SK-N-SH (cell line): ENCODE measurements at regions of chr17 and their contacts with region 1.

Region 1: GRCh38 chr17:80023481-80024205 is 12.0 kb downstream of the TBC1D16 start:
- DNase-seq: peak; percentile 61
- H3K4me3 ChIP-seq: no peak overlapping the region
- H3K27ac ChIP-seq: no peak overlapping the region
- H3K4me1 ChIP-seq: peaks cover 0 to 2% of the 10 kb centered on the region in 2 experiments; a peak in 1 of 4 replicates
- H3K27me3 ChIP-seq: no peaks in the 10 kb centered on the region
- CTCF ChIP-seq: no peak
- EP300 ChIP-seq: no peak
- RAD21 ChIP-seq: no peak

Region 2: GRCh38 chr17:79905832-79906231 is 117.8 kb before region 1 on chr17:
- CTCF ChIA-PET with region 1: no interaction called
- POLR2A ChIA-PET with region 1: no interaction called
- DNase-seq: peak; percentile 41
- H3K4me3 ChIP-seq: no peak overlapping the region
- H3K27ac ChIP-seq: no peak overlapping the region
- H3K4me1 ChIP-seq: no peaks in the 10 kb centered on the region
- H3K27me3 ChIP-seq: peaks cover 27% of the 10 kb centered on the region; the same call in 1 of the 2 replicates
- CTCF ChIP-seq: peak; percentile 27; the same call in 1 of the 2 replicates
- EP300 ChIP-seq: no peak
- RAD21 ChIP-seq: no peak

Region 3: GRCh38 chr17:80035943-80036714 is 12.5 kb after region 1 on chr17 and contains the start of gene CCDC40:
- CTCF ChIA-PET with region 1: interaction called, 16 read pairs
- POLR2A ChIA-PET with region 1: interaction called, 8 read pairs
- DNase-seq: peak; percentile 95
- H3K4me3 ChIP-seq: peak within 1 kb of the TSS; percentile 82 to 100
- H3K27ac ChIP-seq: peak within 1 kb of the TSS; percentile 91 to 96
- H3K4me1 ChIP-seq: peaks cover 3 to 31% of the 10 kb centered on the region in 2 experiments; a peak in 2 of 4 replicates
- H3K27me3 ChIP-seq: no peaks in the 10 kb centered on the region
- CTCF ChIP-seq: no peak; the same call in none of the 2 replicates
- EP300 ChIP-seq: no peak
- RAD21 ChIP-seq: no peak
- polyA plus RNA-seq, gene CCDC40: 17.3 and 21.6 TPM in 2 replicates

Region 4: GRCh38 chr17:80147035-80147836 is 123.6 kb after region 1 on chr17 and contains the start of gene EIF4A3:
- CTCF ChIA-PET with region 1: no interaction called
- POLR2A ChIA-PET with region 1: no interaction called
- DNase-seq: peak; percentile 100
- H3K4me3 ChIP-seq: peak within 1 kb of the TSS; percentile 79 to 97
- H3K27ac ChIP-seq: peak within 1 kb of the TSS; percentile 86 to 87
- H3K4me1 ChIP-seq: peaks cover 12 to 21% of the 10 kb centered on the region in 2 experiments; a peak in 2 of 4 replicates
- H3K27me3 ChIP-seq: no peaks in the 10 kb centered on the region
- CTCF ChIP-seq: no peak; the same call in 1 of the 2 replicates
- EP300 ChIP-seq: 0 out of 4 replicates have a peak, but pooled peaks of 1 of the 2 experiments have one; percentile 4
- RAD21 ChIP-seq: peak; percentile 18; the same call in 1 of the 2 replicates
- polyA plus RNA-seq, gene EIF4A3: 173 and 335 TPM in 2 replicates

Region 5: GRCh38 chr17:80195731-80196529 is 172.3 kb after region 1 on chr17:
- CTCF ChIA-PET with region 1: no interaction called
- POLR2A ChIA-PET with region 1: no interaction called
- DNase-seq: peak; percentile 70
- H3K4me3 ChIP-seq: peak overlapping the region in 1 of 2 experiments; percentile 37; a peak in 1 of 4 replicates
- H3K27ac ChIP-seq: no peak overlapping the region
- H3K4me1 ChIP-seq: no peaks in the 10 kb centered on the region
- H3K27me3 ChIP-seq: 0 out of 2 replicates have a peak, but pooled peaks cover 9% of the 10 kb centered on the region
- CTCF ChIP-seq: peak; percentile 93
- EP300 ChIP-seq: no peak
- RAD21 ChIP-seq: peak; percentile 64